MCF 10A (cell line): ENCODE measurements at regions of chr14 and their contacts with region 1.

Region 1: DNA sequence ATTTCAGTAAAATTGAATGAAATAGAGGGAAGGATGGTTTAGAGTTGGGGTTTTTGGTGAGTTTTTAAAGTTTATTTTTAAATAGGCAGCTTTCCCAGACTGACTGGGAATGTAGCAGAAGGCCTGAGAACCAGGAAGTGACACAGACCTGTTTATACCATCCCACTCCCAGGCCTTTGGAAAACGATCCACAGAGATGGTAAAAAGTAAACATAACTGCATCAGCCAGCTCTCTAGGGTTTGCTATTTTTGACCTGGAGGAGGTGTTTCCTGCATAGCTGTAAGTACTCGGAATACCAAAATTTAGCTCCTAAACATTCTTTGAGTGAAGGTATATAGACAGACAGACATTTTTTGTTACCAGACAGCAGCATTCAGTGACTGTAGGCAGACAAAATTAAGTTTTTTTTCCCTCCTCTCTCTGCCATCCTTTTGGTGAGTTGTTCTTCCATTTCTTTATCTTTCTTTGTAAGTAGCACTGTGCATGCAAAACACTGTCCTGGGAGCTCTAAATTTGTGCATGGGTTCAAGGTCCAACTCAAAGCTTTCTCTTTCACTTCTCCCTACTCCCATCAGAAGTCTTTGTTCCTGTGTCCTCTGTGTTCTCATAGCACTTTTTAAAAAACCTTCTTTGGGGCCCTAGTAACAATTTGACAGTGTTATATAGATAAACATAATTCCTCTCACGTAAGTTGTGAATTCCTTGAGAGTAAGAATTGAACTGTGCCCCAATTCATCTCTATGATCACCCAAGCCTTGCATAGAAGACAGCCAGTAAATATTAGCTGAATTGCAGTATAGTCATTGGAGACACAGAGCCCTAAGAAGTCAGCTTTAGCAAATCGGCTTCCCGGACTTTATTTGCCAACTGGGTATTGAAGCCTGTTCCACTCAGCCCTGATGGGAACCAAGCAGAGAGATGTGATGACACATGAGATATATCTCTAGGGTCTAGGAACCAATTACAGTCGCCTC is 37.4 kb downstream of the SUSD6 start:
- DNase-seq: peak; percentile 49
- H3K4me3 Mint-ChIP-seq: peak overlapping the region; percentile 15
- H3K27ac Mint-ChIP-seq: peak overlapping the region; percentile 65
- H3K4me1 Mint-ChIP-seq: peaks cover 66% of the 10 kb centered on the region
- H3K27me3 Mint-ChIP-seq: no peaks in the 10 kb centered on the region
- CTCF ChIP-seq: no peak

Region 2: DNA sequence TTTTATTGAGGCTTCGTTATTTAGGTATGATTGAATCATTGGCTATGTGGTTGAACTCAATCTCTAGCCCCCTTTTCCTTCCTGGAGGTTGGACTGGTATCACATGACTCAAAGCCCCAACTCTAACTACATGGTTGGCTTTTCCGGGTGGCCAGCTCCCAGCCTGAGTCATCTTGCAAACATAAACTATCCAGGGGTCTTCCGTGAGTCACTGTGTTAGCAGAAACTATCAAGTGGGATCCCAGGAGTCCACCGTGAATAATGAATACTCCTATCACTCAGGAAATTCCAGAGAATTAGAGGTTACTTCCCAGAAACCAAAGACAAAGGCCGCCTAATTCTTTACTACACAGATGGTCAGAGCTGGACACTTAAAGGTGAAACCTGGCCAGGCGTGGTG is 183.9 kb before region 1 on chr14:
- CTCF ChIA-PET with region 1: no interaction called
- POLR2A ChIA-PET with region 1: no interaction called
- intact Hi-C with region 1: no loop called
- DNase-seq: no peak
- H3K4me3 Mint-ChIP-seq: no peak overlapping the region
- H3K27ac Mint-ChIP-seq: no peak overlapping the region
- H3K4me1 Mint-ChIP-seq: no peaks in the 10 kb centered on the region
- H3K27me3 Mint-ChIP-seq: no peaks in the 10 kb centered on the region
- CTCF ChIP-seq: no peak

Region 3: GRCh38 chr14:69715725-69716477 is 67.1 kb after region 1 on chr14:
- CTCF ChIA-PET with region 1: interaction called, 3 read pairs
- POLR2A ChIA-PET with region 1: interaction called, 7 read pairs
- intact Hi-C with region 1: loop called (anchors 10 kb)
- DNase-seq: peak; percentile 98
- H3K4me3 Mint-ChIP-seq: peak overlapping the region; percentile 21
- H3K27ac Mint-ChIP-seq: peak overlapping the region; percentile 61
- H3K4me1 Mint-ChIP-seq: peaks cover 48% of the 10 kb centered on the region
- H3K27me3 Mint-ChIP-seq: no peaks in the 10 kb centered on the region
- CTCF ChIP-seq: no peak